Activated naive CD4-positive, alpha-beta T cell treated with anti-CD3 and anti-CD28 coated beads for 36 hours (primary cell): ENCODE measurements at regions of chr1 and their contacts with region 1.

Region 1: DNA sequence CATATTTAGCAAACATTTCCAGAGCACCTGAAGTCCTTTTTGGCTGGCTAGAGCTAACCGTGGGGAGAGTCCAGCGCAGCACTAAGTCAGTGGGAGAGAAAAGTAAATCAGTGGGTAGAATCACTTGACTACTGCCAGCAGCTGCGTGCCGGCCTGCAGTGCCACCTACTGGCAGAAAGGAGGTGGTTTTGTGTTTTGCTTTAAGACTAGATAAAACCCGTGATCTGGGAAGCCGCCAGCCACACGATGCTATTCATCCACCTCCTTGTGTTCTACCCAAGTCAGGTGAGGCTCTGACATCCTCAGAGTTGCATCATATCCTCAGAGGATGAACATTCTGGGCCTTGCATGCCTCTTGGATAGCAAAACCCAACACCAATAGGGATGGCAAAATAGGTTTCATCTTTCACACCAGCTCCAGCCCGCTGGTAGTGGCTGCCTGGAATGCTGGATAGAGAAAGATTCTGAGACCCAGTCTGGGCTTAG is 14.1 kb upstream of the HEYL start:
- DNase-seq: peak; percentile 90
- H3K4me3 Mint-ChIP-seq: no peak overlapping the region
- H3K27ac Mint-ChIP-seq: no peak overlapping the region
- H3K4me1 Mint-ChIP-seq: peaks cover 8% of the 10 kb centered on the region
- H3K27me3 Mint-ChIP-seq: peaks cover 8% of the 10 kb centered on the region

Region 2: GRCh38 chr1:39609618-39610331 is 43.8 kb before region 1 on chr1:
- CTCF ChIA-PET with region 1: interaction called, 263 read pairs
- intact Hi-C with region 1: loop called (anchors 1 kb)
- DNase-seq: peak; percentile 72
- H3K4me3 Mint-ChIP-seq: no peak overlapping the region
- H3K27ac Mint-ChIP-seq: no peak overlapping the region
- H3K4me1 Mint-ChIP-seq: peaks cover 7% of the 10 kb centered on the region
- H3K27me3 Mint-ChIP-seq: peaks cover 3% of the 10 kb centered on the region

Region 3: GRCh38 chr1:39672551-39672947 is 19.0 kb after region 1 on chr1:
- CTCF ChIA-PET with region 1: interaction called, 160 read pairs
- intact Hi-C with region 1: no loop called
- DNase-seq: peak; percentile 54
- H3K4me3 Mint-ChIP-seq: peak overlapping the region; percentile 17
- H3K27ac Mint-ChIP-seq: no peak overlapping the region
- H3K4me1 Mint-ChIP-seq: peaks cover 6% of the 10 kb centered on the region
- H3K27me3 Mint-ChIP-seq: peaks cover 35% of the 10 kb centered on the region

Region 4: DNA sequence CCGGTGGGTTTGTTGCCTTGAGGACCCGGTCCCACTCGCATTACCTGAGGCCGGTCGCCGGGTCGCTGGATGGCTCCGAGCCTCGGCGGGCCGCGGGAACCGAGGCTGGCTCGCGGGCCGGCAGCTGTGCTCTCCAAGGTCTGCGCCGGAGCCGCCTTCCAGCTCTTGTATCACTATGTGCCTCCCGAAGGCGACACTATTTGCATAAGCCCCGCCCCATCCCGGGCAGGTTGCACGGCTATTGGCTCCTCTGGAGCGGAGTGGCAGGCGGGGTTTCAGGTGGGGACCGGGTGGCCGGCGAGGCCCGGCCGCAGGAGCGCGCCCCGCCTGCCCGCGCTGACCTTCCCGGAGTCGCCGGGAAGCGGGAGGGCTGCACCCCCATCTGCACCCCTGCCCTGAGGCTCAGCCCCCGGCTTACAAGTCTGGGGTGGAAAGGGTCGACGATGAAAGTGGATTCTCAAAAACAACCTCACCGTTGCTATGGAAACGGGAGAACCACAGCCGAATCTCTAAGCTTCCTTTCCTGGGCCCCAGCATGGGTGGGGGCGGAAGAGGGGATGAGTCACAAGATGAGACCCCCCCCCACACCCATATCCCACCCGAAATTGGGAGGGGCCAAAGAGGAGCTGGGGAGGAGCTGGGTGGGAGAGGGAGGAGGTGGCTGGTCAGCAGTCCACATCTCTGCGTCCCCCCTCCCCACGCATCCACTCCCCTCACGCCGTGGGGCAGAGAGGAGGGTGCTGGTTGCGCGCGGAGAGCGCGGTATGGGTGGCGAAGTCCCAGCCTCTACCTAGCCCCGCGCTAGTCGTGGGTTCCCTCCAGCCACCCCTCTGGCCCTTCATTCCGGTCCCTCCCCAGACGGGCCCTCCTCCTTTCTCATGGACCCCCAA is 37.9 kb after region 1 on chr1 and contains the start of gene HPCAL4:
- CTCF ChIA-PET with region 1: interaction called, 10 read pairs
- intact Hi-C with region 1: no loop called
- DNase-seq: peak; percentile 87
- H3K4me3 Mint-ChIP-seq: peak within 1 kb of the TSS; percentile 71
- H3K27ac Mint-ChIP-seq: no peak within 1 kb of the TSS
- H3K4me1 Mint-ChIP-seq: peaks cover 48% of the 10 kb centered on the region
- H3K27me3 Mint-ChIP-seq: peaks cover 9% of the 10 kb centered on the region
- total RNA-seq, gene HPCAL4: 0.43 to 0.52 TPM

Region 5: GRCh38 chr1:39761525-39762260 is 108.1 kb after region 1 on chr1:
- CTCF ChIA-PET with region 1: no interaction called
- intact Hi-C with region 1: no loop called
- DNase-seq: no peak
- H3K4me3 Mint-ChIP-seq: no peak overlapping the region
- H3K27ac Mint-ChIP-seq: no peak overlapping the region
- H3K4me1 Mint-ChIP-seq: no peaks in the 10 kb centered on the region
- H3K27me3 Mint-ChIP-seq: no peaks in the 10 kb centered on the region

Region 6: GRCh38 chr1:39788758-39789570 is 135.4 kb after region 1 on chr1 and contains the start of gene BMP8B:
- CTCF ChIA-PET with region 1: no interaction called
- intact Hi-C with region 1: no loop called
- DNase-seq: peak; percentile 42
- H3K4me3 Mint-ChIP-seq: peak within 1 kb of the TSS; percentile 63
- H3K27ac Mint-ChIP-seq: no peak within 1 kb of the TSS
- H3K4me1 Mint-ChIP-seq: no peaks in the 10 kb centered on the region
- H3K27me3 Mint-ChIP-seq: peaks cover 28% of the 10 kb centered on the region
- total RNA-seq, gene BMP8B: 0.12 to 0.14 TPM

Region 7: DNA sequence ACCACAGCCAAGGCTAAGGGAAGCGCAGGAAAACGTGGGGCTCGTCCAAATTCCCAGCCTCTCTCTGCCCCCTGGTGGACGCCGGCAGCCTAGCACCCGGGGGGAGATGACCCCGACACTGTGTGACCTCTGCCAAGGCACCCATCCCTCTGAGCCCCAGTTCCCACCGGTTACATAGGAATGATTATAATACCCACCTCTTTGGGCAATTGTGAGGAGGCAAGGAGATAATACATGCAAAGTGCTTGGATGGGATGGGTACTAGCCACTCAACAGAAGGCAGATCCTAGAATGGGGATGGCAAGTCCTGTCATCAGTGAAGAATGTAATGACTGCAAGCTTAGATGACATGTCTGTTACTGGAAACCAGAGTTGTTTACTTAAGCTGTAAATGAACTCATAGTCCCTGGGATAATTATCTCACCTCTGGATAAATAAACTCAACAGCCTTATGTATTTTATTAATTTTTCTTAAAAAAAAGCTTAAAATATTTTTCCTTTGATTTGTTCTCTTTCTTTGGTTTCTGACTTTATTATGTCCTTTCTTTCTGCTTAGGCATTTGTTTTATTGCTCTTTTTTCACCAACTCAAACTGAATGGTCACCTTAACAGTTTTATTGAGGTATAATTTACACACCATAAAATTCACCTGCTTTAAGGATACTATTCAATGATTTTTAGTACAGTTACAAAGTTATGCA is 146.3 kb after region 1 on chr1:
- CTCF ChIA-PET with region 1: interaction called, 10 read pairs
- intact Hi-C with region 1: no loop called
- DNase-seq: peak; percentile 81
- H3K4me3 Mint-ChIP-seq: peak overlapping the region; percentile 61
- H3K27ac Mint-ChIP-seq: peak overlapping the region; percentile 54
- H3K4me1 Mint-ChIP-seq: peaks cover 13% of the 10 kb centered on the region
- H3K27me3 Mint-ChIP-seq: no peaks in the 10 kb centered on the region

Region 8: DNA sequence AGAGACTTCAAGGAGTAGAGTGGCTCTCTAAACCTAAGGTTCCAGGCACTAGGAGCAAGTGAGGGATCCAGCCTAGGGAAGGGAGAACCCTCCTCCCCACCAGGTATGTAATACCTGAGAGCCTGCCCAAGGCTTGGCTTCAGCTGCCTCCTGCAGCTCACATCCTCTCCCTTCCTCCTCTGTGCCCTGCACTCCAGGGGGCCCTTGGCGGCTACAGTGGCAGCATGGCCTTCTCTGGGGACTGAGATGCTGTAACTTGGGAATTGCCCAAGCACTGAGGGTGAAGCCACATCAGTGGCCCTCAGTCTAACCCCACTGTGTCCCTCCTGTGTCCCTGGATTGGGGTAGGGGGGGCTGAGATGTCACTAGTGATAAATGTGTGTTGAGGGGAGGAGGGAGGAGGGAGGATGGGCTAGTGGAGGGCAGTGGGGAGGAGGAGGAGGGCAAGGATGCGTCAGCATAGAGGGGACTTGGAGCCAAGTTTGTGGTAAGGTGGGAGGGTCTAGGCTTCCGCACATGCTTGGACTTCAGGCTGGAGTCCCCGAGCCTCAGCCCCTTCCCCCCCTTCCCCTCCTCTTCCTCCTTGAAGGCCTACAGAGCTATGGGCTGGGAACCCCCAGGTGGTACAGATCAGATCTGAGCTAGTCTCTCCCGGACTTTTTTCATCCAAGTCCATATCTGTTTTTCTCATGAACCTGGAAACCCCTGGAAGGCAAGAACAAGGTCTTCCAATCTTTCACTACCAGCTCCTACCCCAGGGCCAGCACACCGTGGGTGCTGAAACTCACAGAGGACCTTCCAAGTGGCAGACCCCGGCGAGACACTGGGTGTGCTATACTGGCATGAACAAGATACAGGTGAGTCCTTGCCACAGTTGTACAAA is 646.0 kb after region 1 on chr1:
- CTCF ChIA-PET with region 1: no interaction called
- intact Hi-C with region 1: no loop called
- DNase-seq: no peak
- H3K4me3 Mint-ChIP-seq: no peak overlapping the region
- H3K27ac Mint-ChIP-seq: no peak overlapping the region
- H3K4me1 Mint-ChIP-seq: no peaks in the 10 kb centered on the region
- H3K27me3 Mint-ChIP-seq: no peaks in the 10 kb centered on the region